ENCODE measurements at regions of chr18 and their contacts with region 1.

Region 1: GRCh38 chr18:6294148-6294784 is 120.4 kb downstream of the L3MBTL4 start:
- DNase-seq: no peak
- H3K4me3 ChIP-seq: peak overlapping the region in 9 of 59 donors; percentile 14 to 33 (median 22)
- H3K27ac ChIP-seq: peak overlapping the region in 25 of 59 donors; percentile 2 to 61 (median 31)
- H3K27me3 ChIP-seq: no peaks in the 10 kb centered on the region
- CTCF ChIP-seq: no peak

Region 2: DNA sequence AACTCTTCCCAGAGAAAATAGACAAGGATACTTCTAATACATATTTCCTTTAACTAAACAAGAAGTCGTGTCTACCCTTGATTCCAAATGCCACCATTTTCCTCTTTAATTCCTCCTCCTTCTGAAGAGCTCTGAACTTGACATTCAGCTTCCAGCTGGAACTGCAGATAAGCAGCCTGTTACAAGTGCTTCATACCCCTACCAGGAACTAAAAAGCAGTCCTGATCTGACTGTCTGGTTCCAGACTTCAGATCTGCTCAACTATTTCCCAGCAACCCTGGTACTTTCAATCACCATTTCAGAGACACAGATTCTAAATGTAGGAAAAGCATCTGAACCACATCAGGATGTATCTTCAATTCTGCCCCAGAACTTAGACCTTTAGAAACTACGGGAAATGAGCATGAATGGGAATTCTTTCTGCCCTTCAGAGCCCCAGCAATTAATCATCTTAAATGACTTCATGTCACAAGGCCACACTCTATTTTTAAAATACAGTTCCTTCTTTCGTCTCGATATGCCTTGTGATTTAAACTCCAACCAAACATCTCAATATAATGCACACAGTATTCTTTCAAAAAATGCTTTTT is 39.1 kb before region 1 on chr18:
- intact Hi-C with region 1: loop called in 1 of 2 experiments (anchors 5 kb)
- DNase-seq: no peak
- H3K4me3 ChIP-seq: peak overlapping the region in 17 of 59 donors; percentile 1 to 47 (median 20)
- H3K27ac ChIP-seq: peak overlapping the region in 33 of 59 donors; percentile 1 to 74 (median 30)
- H3K27me3 ChIP-seq: no peaks in the 10 kb centered on the region
- CTCF ChIP-seq: no peak

Measured in dorsolateral prefrontal cortex (tissue), 120 donors.